A549 (cell line): ENCODE measurements at regions of chr1 and their contacts with region 1.

Region 1: GRCh38 chr1:233364695-233365539 is 37.4 kb downstream of the MAP3K21 start:
- DNase-seq: peak; percentile 21 to 49
- ATAC-seq: peak; percentile 49 to 50; a peak in 4 of 6 replicates
- H3K4me3 ChIP-seq: no peak overlapping the region
- H3K27ac ChIP-seq: peak overlapping the region; percentile 69 to 76
- H3K4me1 ChIP-seq: peaks cover 85% of the 10 kb centered on the region
- CTCF ChIP-seq: peak; percentile 84
- EP300 ChIP-seq: no peak
- POLR2A ChIP-seq: no peak
- RAD21 ChIP-seq: peak; percentile 69 to 83

Region 2: GRCh38 chr1:233304489-233305102 is 60.3 kb before region 1 on chr1:
- CTCF ChIA-PET with region 1: interaction called, 34 read pairs
- POLR2A ChIA-PET with region 1: no interaction called
- DNase-seq: peak in 1 of 2 experiments; percentile 38
- ATAC-seq: peak in 1 of 2 experiments; percentile 61; a peak in 2 of 6 replicates
- H3K4me3 ChIP-seq: no peak overlapping the region
- H3K27ac ChIP-seq: no peak overlapping the region
- H3K4me1 ChIP-seq: 0 out of 3 replicates have a peak, but pooled peaks cover 3% of the 10 kb centered on the region
- CTCF ChIP-seq: peak; percentile 95
- EP300 ChIP-seq: no peak
- POLR2A ChIP-seq: no peak
- RAD21 ChIP-seq: peak; percentile 91 to 94

Region 3: DNA sequence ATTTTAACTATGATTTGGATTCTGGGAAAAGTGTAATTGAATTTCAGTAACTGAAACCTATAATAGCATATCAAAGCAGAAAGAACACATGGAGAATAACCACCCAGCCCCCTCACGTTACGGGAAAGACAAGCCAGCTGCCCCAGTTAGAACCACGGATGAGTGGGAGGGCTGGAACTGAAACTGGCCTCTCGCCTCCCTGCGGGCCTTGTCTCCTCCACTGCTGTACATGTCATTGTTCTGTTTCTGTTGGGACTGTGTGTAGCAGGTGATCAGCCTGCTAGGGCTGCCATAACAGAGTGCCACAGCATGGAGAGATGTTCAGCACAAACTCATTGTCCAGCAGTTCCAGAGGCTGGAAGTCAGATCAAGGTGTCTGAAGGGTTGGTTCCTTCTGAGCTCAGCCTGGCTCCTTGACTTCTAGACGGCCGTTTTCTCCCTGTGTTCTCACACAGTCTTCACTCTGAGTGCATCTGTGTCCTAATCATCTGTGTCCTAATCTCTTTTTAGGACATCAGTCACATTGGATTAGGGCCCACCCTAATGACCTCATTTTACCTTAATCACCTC is 15.0 kb after region 1 on chr1:
- CTCF ChIA-PET with region 1: interaction called, 19 read pairs
- POLR2A ChIA-PET with region 1: no interaction called
- DNase-seq: no peak
- ATAC-seq: no peak
- H3K4me3 ChIP-seq: no peak overlapping the region
- H3K27ac ChIP-seq: no peak overlapping the region
- H3K4me1 ChIP-seq: 0 out of 3 replicates have a peak, but pooled peaks cover 4% of the 10 kb centered on the region
- CTCF ChIP-seq: no peak
- EP300 ChIP-seq: no peak
- POLR2A ChIP-seq: no peak
- RAD21 ChIP-seq: no peak

Region 4: GRCh38 chr1:233394860-233395717 is 30.2 kb after region 1 on chr1:
- CTCF ChIA-PET with region 1: interaction called, 14 read pairs
- POLR2A ChIA-PET with region 1: no interaction called
- DNase-seq: peak; percentile 61 to 70
- ATAC-seq: peak; percentile 96 to 97
- H3K4me3 ChIP-seq: no peak overlapping the region
- H3K27ac ChIP-seq: peak overlapping the region in 1 of 2 experiments; percentile 62; a peak in 2 of 6 replicates
- H3K4me1 ChIP-seq: peaks cover 13% of the 10 kb centered on the region
- CTCF ChIP-seq: peak; percentile 92
- EP300 ChIP-seq: no peak
- POLR2A ChIP-seq: no peak
- RAD21 ChIP-seq: peak; percentile 91 to 92